ENCODE measurements at regions of chr7 and their contacts with region 1.

Region 1: GRCh38 chr7:66557608-66558143 is 71.0 kb upstream of the KCTD7 start:
- DNase-seq: peak; percentile 89
- ATAC-seq: peak; percentile 90
- H3K4me3 Mint-ChIP-seq: no peak overlapping the region
- H3K27ac Mint-ChIP-seq: no peak overlapping the region
- H3K4me1 Mint-ChIP-seq: peaks cover 3% of the 10 kb centered on the region
- H3K27me3 Mint-ChIP-seq: no peaks in the 10 kb centered on the region
- CTCF ChIP-seq: peak; percentile 99

Region 2: DNA sequence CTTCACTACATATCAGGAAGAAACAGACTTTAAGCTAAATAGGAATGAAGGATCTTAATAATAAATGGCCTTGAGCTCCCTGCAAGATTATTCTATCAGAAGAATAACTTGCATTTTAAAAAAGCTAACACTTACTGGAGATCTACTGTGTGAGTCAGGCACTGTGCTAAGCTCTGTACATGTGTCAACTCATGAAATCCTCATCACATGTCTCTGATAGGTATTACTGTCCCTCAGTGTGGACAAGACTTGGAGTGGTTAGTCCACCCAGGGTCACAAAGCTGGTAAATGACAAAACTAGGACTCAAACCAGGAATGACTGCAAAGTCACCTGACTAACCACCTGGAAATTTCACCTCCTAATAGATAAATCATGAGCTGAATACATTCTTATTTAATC is 13.9 kb after region 1 on chr7:
- CTCF ChIA-PET with region 1: interaction called, 15 read pairs
- POLR2A ChIA-PET with region 1: no interaction called
- DNase-seq: no peak
- ATAC-seq: no peak
- H3K4me3 Mint-ChIP-seq: no peak overlapping the region
- H3K27ac Mint-ChIP-seq: no peak overlapping the region
- H3K4me1 Mint-ChIP-seq: no peaks in the 10 kb centered on the region
- H3K27me3 Mint-ChIP-seq: no peaks in the 10 kb centered on the region
- CTCF ChIP-seq: no peak

Region 3: GRCh38 chr7:66609176-66609575 is 51.5 kb after region 1 on chr7:
- CTCF ChIA-PET with region 1: interaction called, 12 read pairs
- POLR2A ChIA-PET with region 1: no interaction called
- DNase-seq: no peak
- ATAC-seq: no peak; the same call in 1 of the 2 replicates
- H3K4me3 Mint-ChIP-seq: no peak overlapping the region
- H3K27ac Mint-ChIP-seq: no peak overlapping the region
- H3K4me1 Mint-ChIP-seq: peaks cover 11% of the 10 kb centered on the region
- H3K27me3 Mint-ChIP-seq: peaks cover 2% of the 10 kb centered on the region
- CTCF ChIP-seq: no peak

Region 4: DNA sequence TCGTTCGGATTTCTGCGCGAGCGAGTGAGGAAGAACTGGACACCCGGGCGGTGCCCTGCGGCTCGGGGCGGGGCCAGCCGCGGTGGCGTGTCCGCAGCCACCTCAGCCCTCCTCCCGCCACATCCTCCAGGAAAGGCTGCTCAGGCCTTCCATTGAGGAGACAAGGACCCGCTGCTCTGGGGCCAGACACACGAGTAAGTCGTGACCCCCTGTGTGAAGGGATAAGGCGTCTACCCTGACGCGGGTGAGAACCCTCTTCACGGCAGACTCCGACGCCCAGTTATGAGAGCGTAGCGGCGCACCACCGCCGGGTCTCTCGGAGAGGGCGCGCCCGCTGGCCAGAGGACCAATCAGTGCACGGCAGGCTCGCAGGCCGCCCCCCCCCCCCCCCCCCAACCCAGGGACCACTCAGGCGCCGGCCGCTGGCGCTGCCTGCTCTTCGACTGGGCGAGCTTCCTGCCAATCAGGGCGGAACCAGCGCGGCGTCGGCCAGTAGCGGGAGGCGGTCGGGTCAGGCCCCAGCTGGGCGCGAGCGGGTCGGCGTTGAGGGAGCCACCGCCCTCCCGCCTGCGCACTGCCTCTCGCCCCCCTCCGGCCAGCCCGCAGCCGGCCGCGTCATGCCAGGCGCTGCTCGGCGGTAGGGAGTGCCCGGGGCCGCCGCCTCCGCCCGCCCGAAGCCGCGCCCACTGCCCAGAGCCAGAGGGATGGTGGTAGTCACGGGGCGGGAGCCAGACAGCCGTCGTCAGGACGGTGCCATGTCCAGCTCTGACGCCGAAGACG is 70.9 kb after region 1 on chr7 and contains the start of gene KCTD7:
- CTCF ChIA-PET with region 1: interaction called, 16 read pairs
- POLR2A ChIA-PET with region 1: no interaction called
- DNase-seq: peak; percentile 97
- ATAC-seq: peak; percentile 95
- H3K4me3 Mint-ChIP-seq: peak within 1 kb of the TSS; percentile 89
- H3K27ac Mint-ChIP-seq: peak within 1 kb of the TSS; percentile 91
- H3K4me1 Mint-ChIP-seq: peaks cover 12% of the 10 kb centered on the region
- H3K27me3 Mint-ChIP-seq: peaks cover 17% of the 10 kb centered on the region
- CTCF ChIP-seq: no peak
- total RNA-seq, gene KCTD7: 10.5 to 11.6 TPM (median 10.8 TPM) in 3 replicates

Region 5: GRCh38 chr7:66643395-66643794 is 85.7 kb after region 1 on chr7:
- CTCF ChIA-PET with region 1: interaction called, 29 read pairs
- POLR2A ChIA-PET with region 1: no interaction called
- DNase-seq: no peak
- ATAC-seq: no peak
- H3K4me3 Mint-ChIP-seq: no peak overlapping the region
- H3K27ac Mint-ChIP-seq: no peak overlapping the region
- H3K4me1 Mint-ChIP-seq: no peaks in the 10 kb centered on the region
- H3K27me3 Mint-ChIP-seq: no peaks in the 10 kb centered on the region
- CTCF ChIP-seq: no peak

Region 6: DNA sequence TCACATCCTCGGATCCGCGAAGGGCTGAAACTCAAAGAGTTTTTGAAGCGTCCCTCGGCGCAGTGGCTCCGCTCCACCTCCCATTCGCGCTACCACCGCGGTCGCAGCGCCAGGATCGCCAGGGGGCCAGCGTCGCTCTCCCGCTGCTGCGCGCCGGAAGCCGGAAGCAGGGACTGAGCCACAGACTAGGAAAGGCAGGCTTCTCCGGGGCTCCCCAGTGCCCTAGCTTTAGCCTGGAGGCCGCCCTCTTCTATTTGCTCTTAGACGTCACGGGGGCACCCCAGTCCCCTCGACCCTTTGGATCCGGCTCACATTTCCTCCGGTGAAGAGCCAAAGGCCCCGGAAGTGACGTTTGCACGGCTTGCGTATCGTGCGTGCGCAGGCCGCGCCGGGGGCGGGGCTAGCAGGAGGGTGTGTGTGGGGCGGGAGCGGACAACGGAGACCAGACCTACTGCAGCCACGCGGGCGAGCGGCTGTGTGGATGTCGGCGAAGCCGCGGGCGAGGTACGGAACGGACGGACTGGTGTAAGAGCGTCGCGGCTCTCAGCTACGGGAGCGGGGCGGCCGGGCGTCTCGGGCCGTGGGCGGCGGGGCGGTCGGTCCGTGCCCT is 96.6 kb after region 1 on chr7:
- CTCF ChIA-PET with region 1: interaction called, 18 read pairs
- POLR2A ChIA-PET with region 1: interaction called, 3 read pairs
- DNase-seq: peak; percentile 98
- ATAC-seq: peak; percentile 90
- H3K4me3 Mint-ChIP-seq: peak overlapping the region; percentile 92
- H3K27ac Mint-ChIP-seq: peak overlapping the region; percentile 99
- H3K4me1 Mint-ChIP-seq: peaks cover 11% of the 10 kb centered on the region
- H3K27me3 Mint-ChIP-seq: no peaks in the 10 kb centered on the region
- CTCF ChIP-seq: no peak